ENCODE measurements at regions of chr6 and their contacts with region 1.

Region 1: DNA sequence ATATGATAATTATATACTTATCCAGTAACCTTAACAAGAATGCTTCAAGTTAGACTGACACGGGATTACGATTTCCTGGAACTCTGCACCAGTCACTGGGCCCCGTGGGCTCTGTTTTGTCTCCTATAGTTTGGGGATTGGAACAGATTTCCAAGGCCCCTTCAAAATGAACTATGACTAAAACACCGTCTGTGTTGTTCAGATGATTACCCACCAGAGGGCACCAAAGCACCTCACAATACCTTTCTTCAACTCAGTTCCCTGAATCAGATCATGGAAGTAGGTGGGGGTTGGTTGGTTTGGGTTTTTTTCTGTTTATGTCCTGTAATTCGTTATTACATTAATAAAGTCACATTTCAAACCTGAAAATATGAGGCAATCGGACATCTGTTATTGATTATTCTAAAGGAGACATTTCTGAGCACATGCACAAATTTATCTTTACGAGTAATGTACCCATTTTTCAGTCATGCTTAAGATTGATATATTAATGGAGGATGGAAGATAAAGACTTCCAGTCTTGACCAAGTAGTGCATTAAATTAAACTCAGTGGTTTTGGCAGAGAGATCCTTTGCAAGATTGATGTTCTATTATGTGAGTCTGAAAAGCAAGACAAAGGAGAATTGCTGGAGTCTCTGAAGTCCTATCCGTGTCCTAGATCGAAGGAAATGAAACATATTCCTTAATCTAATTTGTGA is 112.0 kb upstream of the COL21A1 start:
- DNase-seq: peak in 13 of 14 experiments; percentile 7 to 73 (median 34)
- ATAC-seq: peak; percentile 68
- H3K4me3 ChIP-seq: no peak overlapping the region
- H3K4me3 Mint-ChIP-seq: no peak overlapping the region
- H3K27ac ChIP-seq: no peak overlapping the region
- H3K27ac Mint-ChIP-seq: no peak overlapping the region
- H3K4me1 ChIP-seq: no peaks in the 10 kb centered on the region
- H3K4me1 Mint-ChIP-seq: no peaks in the 10 kb centered on the region
- H3K27me3 ChIP-seq: no peaks in the 10 kb centered on the region
- H3K27me3 Mint-ChIP-seq: no peaks in the 10 kb centered on the region
- CTCF ChIP-seq: peak; percentile 92

Region 2: DNA sequence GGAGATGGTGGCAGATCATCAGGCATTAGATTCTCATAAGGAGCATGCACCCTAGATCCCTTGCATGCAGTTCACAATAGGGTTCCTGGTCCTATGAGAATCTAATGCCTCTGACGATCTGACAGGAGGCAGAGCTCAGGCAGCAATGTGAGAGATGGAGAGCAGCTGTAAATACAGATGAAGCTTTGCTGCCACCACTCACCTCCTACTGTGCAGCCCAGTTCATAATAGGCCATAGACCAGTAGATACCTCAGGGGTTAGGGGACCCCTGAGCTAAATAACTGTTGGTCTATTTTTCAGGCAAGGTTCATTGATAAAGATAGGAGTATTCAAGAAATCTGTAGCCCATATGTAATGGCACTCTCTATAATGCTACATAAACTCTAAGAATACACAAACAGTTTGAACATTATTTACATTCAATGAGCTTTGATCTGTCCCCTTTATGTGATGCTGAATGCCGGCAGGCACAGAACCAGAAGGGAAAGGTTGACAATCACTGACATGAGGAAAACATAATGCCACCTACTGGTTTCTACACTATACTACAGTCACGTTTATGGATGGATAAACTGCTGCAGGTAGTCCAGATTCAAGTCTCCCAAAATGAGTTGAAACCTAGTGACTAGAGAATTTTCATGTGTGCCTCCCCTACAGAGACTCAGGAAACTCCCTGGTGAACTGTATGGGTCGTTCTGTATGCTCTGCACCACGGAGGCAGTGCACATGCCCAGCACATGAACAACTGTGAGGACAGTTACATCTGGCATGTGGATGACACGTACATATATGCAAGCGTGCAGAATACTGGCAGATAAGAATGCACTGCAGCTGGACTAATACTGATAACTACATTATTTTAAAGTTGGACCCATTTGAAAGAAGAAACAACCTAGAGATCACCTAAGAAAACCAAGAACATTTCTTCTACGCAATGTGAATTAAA is 211.3 kb after region 1 on chr6:
- CTCF ChIA-PET with region 1: no interaction called
- POLR2A ChIA-PET with region 1: no interaction called
- intact Hi-C with region 1: loop called (anchors 1 to 2 kb)
- DNase-seq: peak in 3 of 14 experiments; percentile 11 to 39 (median 32)
- ATAC-seq: peak; percentile 37
- H3K4me3 ChIP-seq: no peak overlapping the region
- H3K4me3 Mint-ChIP-seq: no peak overlapping the region
- H3K27ac ChIP-seq: no peak overlapping the region
- H3K27ac Mint-ChIP-seq: no peak overlapping the region
- H3K4me1 ChIP-seq: no peaks in the 10 kb centered on the region
- H3K4me1 Mint-ChIP-seq: no peaks in the 10 kb centered on the region
- H3K27me3 ChIP-seq: peaks cover 0 to 3% of the 10 kb centered on the region in 2 experiments
- H3K27me3 Mint-ChIP-seq: no peaks in the 10 kb centered on the region
- CTCF ChIP-seq: peak; percentile 68

Region 3: DNA sequence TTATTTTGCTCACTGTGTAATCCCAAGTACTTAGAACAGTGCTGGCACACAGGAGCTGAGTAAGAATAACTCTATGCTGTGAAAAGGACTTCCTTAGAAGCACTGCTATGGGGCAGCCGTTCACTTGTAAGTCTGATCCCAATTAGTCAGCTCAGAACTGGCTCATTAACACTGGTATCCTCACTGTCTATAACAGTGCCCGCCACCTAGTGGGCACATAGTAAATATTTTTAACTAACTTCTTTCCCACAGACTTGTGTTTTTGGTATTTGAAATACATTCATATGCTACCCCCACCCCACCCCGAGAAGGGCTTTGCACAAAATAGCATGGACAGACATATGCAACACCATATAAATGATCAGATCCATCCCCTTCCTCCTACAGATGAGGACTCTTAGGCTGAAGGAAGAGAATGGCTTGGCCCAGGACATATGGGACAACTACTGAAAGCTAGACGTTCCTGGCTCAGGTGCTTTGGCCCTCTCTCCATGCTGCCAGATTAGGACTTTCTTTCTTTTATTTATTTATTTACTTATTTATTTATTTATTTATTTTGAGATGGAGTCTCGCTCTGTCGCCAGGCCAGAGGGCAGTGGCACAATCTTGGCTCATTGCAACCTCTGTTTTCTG is 236.3 kb after region 1 on chr6:
- CTCF ChIA-PET with region 1: interaction called, 3 read pairs
- POLR2A ChIA-PET with region 1: no interaction called
- intact Hi-C with region 1: loop called (anchors 1 to 2 kb)
- DNase-seq: peak in 9 of 14 experiments; percentile 3 to 67 (median 35)
- ATAC-seq: peak; percentile 76
- H3K4me3 ChIP-seq: no peak overlapping the region
- H3K4me3 Mint-ChIP-seq: no peak overlapping the region
- H3K27ac ChIP-seq: no peak overlapping the region
- H3K27ac Mint-ChIP-seq: no peak overlapping the region
- H3K4me1 ChIP-seq: peaks cover 12% of the 10 kb centered on the region
- H3K4me1 Mint-ChIP-seq: peaks cover 23% of the 10 kb centered on the region
- H3K27me3 ChIP-seq: no peaks in the 10 kb centered on the region
- H3K27me3 Mint-ChIP-seq: no peaks in the 10 kb centered on the region
- CTCF ChIP-seq: peak; percentile 72